OCI-LY7 (cell line): ENCODE measurements at regions of chr3 and their contacts with region 1.

Region 1: GRCh38 chr3:41522612-41523011 is 323.3 kb downstream of the CTNNB1 start:
- DNase-seq: peak; percentile 7
- H3K4me3 ChIP-seq: no peak overlapping the region
- H3K27ac ChIP-seq: no peak overlapping the region
- H3K4me1 ChIP-seq: no peaks in the 10 kb centered on the region
- CTCF ChIP-seq: no peak

Region 2: DNA sequence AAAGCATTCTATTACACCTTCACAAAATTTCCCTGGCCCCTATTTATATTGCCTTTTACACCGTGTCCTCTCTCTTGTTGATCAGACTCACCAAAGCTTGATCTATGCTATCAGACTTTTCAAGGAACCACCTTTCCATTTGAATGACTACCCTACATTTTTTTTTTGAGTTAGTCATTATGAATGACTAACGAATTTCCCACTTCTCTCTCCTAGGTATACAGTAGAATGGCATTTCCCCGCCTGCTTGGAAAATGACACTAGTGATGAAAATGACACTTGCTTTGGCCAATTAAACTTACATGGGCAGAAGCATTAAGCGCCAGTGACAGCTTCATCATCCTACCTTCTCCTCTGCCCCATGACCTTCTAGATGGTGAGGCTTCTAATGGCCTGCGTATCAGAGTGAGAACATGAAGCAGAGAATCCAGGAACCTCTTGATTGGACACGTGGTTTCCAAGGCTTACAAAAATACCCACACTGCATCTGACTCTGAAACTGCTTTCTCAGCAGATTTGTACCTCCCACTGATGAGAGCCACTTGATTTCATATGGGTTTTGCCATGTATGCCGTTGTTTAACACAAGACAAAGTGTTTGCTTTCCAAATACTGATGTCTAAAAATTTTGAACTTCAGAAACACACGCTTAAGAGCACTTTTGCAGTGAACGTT is 47.2 kb after region 1 on chr3:
- CTCF ChIA-PET with region 1: no interaction called
- POLR2A ChIA-PET with region 1: interaction called, 4 read pairs
- intact Hi-C with region 1: loop called (anchors 1 kb)
- DNase-seq: no peak
- H3K4me3 ChIP-seq: no peak overlapping the region
- H3K27ac ChIP-seq: no peak overlapping the region
- H3K4me1 ChIP-seq: no peaks in the 10 kb centered on the region
- CTCF ChIP-seq: no peak

Region 3: GRCh38 chr3:41581700-41582099 is 59.1 kb after region 1 on chr3:
- CTCF ChIA-PET with region 1: no interaction called
- POLR2A ChIA-PET with region 1: interaction called, 7 read pairs
- intact Hi-C with region 1: loop called (anchors 5 kb)
- DNase-seq: peak; percentile 34
- H3K4me3 ChIP-seq: no peak overlapping the region
- H3K27ac ChIP-seq: no peak overlapping the region
- H3K4me1 ChIP-seq: peaks cover 2% of the 10 kb centered on the region
- CTCF ChIP-seq: no peak

Region 4: GRCh38 chr3:41836360-41837134 is 313.9 kb after region 1 on chr3:
- CTCF ChIA-PET with region 1: no interaction called
- POLR2A ChIA-PET with region 1: no interaction called
- intact Hi-C with region 1: no loop called
- DNase-seq: no peak
- H3K4me3 ChIP-seq: no peak overlapping the region
- H3K27ac ChIP-seq: no peak overlapping the region
- H3K4me1 ChIP-seq: no peaks in the 10 kb centered on the region
- CTCF ChIP-seq: no peak